ENCODE measurements at regions of chr15 and their contacts with region 1.

Region 1: DNA sequence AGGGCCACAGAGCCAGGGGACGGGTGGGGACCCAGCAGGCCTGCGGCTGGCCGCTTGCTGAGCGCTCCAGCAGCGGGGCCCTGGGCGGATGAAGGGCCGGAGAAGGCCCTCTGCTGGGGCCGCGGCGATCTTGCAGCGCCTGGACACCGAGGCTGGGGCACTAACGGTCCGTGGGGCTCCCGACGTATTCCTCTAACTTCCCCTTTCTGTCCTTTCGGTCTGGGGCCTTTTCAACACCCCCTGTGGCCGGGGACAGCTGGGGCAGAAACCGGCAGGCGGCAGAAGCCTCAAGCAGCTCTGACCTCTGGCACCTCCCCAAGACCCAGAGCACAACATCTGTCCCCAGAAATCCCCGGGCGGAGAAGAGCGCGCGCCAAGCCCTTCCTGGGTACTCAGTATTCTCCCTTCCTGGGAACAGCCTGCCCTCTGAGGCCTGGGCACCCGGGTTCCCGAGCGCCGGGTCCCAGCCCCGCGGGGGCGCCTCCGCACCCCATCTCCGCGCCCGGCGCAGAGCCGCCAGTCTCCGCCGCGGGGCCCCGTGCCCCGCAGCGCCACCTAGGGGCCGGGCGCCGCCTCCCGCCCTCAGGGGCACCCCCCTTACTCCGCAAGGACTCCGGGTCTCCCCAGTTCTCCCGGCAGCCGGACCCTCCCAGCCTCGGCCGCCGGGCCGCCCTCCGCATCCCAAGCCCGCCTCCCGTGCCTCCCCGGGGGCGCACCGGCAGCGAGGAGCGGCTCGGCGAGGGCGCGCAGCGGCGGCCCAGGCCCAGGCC is 582 bp upstream of the SLCO3A1 start:
- DNase-seq: peak; percentile 65
- ATAC-seq: peak; percentile 65
- H3K4me3 Mint-ChIP-seq: peak overlapping the region; percentile 75
- H3K27ac Mint-ChIP-seq: peak overlapping the region; percentile 69
- H3K4me1 Mint-ChIP-seq: peaks cover 57% of the 10 kb centered on the region
- H3K27me3 Mint-ChIP-seq: peaks cover 3% of the 10 kb centered on the region
- CTCF ChIP-seq: peak; percentile 82

Region 2: GRCh38 chr15:91302588-91303439 is 550.1 kb before region 1 on chr15:
- CTCF ChIA-PET with region 1: interaction called, 3 read pairs
- POLR2A ChIA-PET with region 1: no interaction called
- intact Hi-C with region 1: loop called (anchors 10 kb)
- DNase-seq: no peak
- ATAC-seq: peak; percentile 49
- H3K4me3 Mint-ChIP-seq: no peak overlapping the region
- H3K27ac Mint-ChIP-seq: no peak overlapping the region
- H3K4me1 Mint-ChIP-seq: peaks cover 3% of the 10 kb centered on the region
- H3K27me3 Mint-ChIP-seq: peaks cover 10% of the 10 kb centered on the region
- CTCF ChIP-seq: peak; percentile 87

Region 3: GRCh38 chr15:91769894-91770293 is 83.0 kb before region 1 on chr15:
- CTCF ChIA-PET with region 1: no interaction called
- POLR2A ChIA-PET with region 1: no interaction called
- intact Hi-C with region 1: no loop called
- DNase-seq: no peak
- ATAC-seq: no peak
- H3K4me3 Mint-ChIP-seq: no peak overlapping the region
- H3K27ac Mint-ChIP-seq: no peak overlapping the region
- H3K4me1 Mint-ChIP-seq: no peaks in the 10 kb centered on the region
- H3K27me3 Mint-ChIP-seq: peaks cover 3% of the 10 kb centered on the region
- CTCF ChIP-seq: no peak

Region 4: GRCh38 chr15:91866371-91866905 is 13.5 kb after region 1 on chr15:
- CTCF ChIA-PET with region 1: interaction called, 12 read pairs
- POLR2A ChIA-PET with region 1: interaction called, 3 read pairs
- intact Hi-C with region 1: no loop called
- DNase-seq: no peak
- ATAC-seq: no peak
- H3K4me3 Mint-ChIP-seq: no peak overlapping the region
- H3K27ac Mint-ChIP-seq: no peak overlapping the region
- H3K4me1 Mint-ChIP-seq: peaks cover 56% of the 10 kb centered on the region
- H3K27me3 Mint-ChIP-seq: peaks cover 5% of the 10 kb centered on the region
- CTCF ChIP-seq: no peak

Region 5: GRCh38 chr15:91942676-91943576 is 90.0 kb after region 1 on chr15:
- CTCF ChIA-PET with region 1: interaction called, 20 read pairs
- POLR2A ChIA-PET with region 1: no interaction called
- intact Hi-C with region 1: no loop called
- DNase-seq: peak; percentile 46
- ATAC-seq: peak; percentile 77
- H3K4me3 Mint-ChIP-seq: no peak overlapping the region
- H3K27ac Mint-ChIP-seq: peak overlapping the region; percentile 27
- H3K4me1 Mint-ChIP-seq: peaks cover 23% of the 10 kb centered on the region
- H3K27me3 Mint-ChIP-seq: peaks cover 2% of the 10 kb centered on the region
- CTCF ChIP-seq: no peak